Right cardiac atrium (tissue), 5 donors: ENCODE measurements at regions of chr18 and their contacts with region 1.

Region 1: GRCh38 chr18:22983175-22983574 is 50.0 kb downstream of the RBBP8 start:
- DNase-seq: no peak
- ATAC-seq: no peak
- H3K4me3 ChIP-seq: no peak overlapping the region
- H3K27ac ChIP-seq: no peak overlapping the region
- H3K4me1 ChIP-seq: no peaks in the 10 kb centered on the region
- H3K27me3 ChIP-seq: no peaks in the 10 kb centered on the region

Region 2: GRCh38 chr18:22451796-22452195 is 531.4 kb before region 1 on chr18:
- intact Hi-C with region 1: no loop called
- DNase-seq: peak in 1 of 3 donors; percentile 53
- ATAC-seq: peak in 1 of 2 donors; percentile 24
- H3K4me3 ChIP-seq: no peak overlapping the region
- H3K27ac ChIP-seq: peak overlapping the region; percentile 65
- H3K4me1 ChIP-seq: peaks cover 2% of the 10 kb centered on the region
- H3K27me3 ChIP-seq: no peaks in the 10 kb centered on the region

Region 3: DNA sequence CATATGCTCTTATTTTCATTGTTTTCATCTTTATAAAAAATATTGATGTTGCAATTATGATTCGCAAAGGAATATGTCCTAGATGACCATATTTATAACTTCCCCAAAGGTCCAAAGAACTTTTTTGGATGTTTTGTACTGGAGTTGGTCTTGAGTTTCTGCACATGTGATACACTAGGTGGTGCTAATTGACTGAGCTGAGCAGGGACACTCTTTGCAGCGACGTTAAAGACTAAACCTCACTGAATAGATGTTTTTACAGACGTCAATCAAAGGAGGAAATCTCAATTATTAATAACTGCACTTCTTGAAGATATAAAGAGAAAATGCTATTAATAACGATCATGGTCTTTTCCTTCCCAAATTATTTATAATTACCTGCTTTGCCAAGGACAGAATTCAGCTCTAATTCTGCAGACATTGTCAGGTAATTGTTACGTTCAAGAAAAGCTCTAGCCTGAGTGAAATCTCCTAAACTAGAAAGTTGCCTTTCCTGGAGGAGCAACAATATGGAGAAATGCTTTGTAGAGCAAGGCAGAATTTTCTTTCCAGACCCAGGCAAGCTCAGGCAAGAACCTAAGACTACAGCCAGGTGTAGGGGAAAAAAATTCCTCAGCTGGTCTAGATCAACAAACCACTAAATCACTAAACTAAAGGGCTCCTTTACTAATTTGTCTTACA is 169.4 kb before region 1 on chr18:
- intact Hi-C with region 1: loop called in 1 of 4 experiments (anchors 5 kb)
- DNase-seq: no peak
- ATAC-seq: peak in 1 of 2 donors; percentile 47
- H3K4me3 ChIP-seq: no peak overlapping the region
- H3K27ac ChIP-seq: no peak overlapping the region
- H3K4me1 ChIP-seq: no peaks in the 10 kb centered on the region
- H3K27me3 ChIP-seq: no peaks in the 10 kb centered on the region

Region 4: DNA sequence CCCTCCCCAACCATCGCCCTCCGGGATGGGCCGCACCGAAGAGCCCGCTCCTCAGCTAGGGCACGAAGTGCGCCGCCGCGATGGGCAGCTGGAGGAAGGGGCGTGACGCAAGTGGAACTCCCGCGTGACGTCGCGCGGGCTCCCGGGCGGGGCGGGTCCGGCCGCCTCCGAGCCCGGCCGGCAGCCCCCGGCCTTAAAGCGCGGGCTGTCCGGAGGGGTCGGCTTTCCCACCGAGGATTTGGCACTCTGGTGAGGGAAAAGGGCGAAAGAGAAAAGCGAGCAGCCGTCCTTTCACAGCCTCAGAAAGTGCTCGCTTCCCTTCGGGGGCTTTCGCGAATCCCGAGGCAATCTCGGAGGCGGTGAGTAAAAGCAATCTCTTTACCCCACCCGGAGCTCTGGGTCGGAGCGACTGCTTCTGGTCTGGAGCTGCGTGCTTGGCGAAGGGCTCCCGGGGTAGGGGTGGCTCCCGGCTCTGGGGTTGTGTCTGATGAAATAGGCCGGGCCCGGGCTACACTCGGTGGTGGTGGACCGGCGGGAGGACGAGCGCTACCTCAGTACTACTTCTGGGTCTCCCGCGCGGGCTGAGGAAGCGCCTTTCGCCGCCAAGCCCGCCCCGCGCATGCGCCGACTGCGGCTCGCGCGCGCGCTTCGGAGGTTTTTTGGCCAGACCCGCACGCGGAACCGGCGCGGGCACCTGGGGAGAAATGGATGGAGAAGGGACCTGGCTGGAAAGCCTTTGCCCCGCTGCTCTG is 49.8 kb before region 1 on chr18 and contains the start of gene RBBP8:
- intact Hi-C with region 1: loop called in 1 of 4 experiments (anchors 10 kb)
- DNase-seq: peak; percentile 86 to 94 (median 93)
- ATAC-seq: peak; percentile 98
- H3K4me3 ChIP-seq: peak within 1 kb of the TSS; percentile 92
- H3K27ac ChIP-seq: peak within 1 kb of the TSS; percentile 96
- H3K4me1 ChIP-seq: no peaks in the 10 kb centered on the region
- H3K27me3 ChIP-seq: no peaks in the 10 kb centered on the region
- total RNA-seq, gene RBBP8: 6.3 to 9.7 (median 6.7) TPM

Region 5: GRCh38 chr18:24063121-24063731 is 1080.1 kb after region 1 on chr18:
- intact Hi-C with region 1: no loop called
- DNase-seq: no peak
- ATAC-seq: no peak
- H3K4me3 ChIP-seq: no peak overlapping the region
- H3K27ac ChIP-seq: no peak overlapping the region
- H3K4me1 ChIP-seq: no peaks in the 10 kb centered on the region
- H3K27me3 ChIP-seq: no peaks in the 10 kb centered on the region